A673 (cell line): ENCODE measurements at regions of chr12 and their contacts with region 1.

Region 1: DNA sequence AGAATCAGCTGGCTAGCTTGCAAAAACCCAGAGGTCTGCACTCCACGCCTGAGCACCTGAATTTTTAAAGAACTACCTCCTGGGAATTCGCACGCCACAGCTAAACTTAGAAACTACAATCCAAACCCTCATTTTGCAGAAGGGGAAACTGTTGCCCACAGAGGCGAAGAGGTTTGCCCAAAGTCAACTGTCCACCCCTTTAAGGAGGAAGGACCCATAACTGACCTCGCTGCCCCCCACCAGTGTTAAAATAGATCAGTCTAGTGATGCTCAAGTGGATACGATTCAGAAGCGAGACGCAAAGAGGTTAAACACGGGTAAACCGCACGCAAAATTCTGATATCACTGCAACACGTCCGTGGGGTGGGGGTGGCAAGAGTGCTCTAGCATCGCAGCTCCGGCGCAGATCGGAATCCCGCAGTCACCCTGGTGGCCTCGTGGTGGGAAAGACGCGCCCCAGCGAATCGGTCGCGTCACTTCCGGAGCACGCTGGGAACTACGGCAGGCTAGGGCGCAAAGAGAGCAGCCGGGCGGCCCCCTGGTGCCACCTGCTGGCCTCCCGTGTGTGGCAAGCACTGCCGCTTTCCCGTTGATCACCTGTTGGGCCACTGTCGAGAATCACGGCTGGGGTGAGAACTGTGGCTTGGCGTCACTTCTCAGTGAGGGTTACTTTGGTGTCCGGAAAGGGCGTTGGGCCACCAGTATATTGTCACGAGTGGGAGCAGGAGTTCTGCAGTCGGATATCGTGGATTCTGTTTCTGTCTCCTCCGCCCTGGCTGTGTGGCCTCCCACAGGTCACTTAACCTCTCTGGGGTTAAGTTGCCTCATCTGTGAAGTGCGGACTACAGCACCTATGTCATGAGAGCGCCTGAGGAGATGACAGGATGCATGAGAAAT is at the start of gene ALKBH2:
- DNase-seq: peak; percentile 96
- H3K4me3 ChIP-seq: peak within 1 kb of the TSS; percentile 48
- H3K27ac ChIP-seq: peak within 1 kb of the TSS; percentile 55
- H3K4me1 ChIP-seq: peaks cover 21% of the 10 kb centered on the region
- H3K27me3 ChIP-seq: no peaks in the 10 kb centered on the region
- CTCF ChIP-seq: peak; percentile 98
- total RNA-seq, gene ALKBH2: 40.6 and 44.5 TPM in 2 replicates

Region 2: GRCh38 chr12:108562348-108563135 is 530.7 kb before region 1 on chr12 and contains the start of gene ISCU:
- CTCF ChIA-PET with region 1: no interaction called
- POLR2A ChIA-PET with region 1: no interaction called
- intact Hi-C with region 1: loop called (anchors 2 kb)
- DNase-seq: peak; percentile 98
- H3K4me3 ChIP-seq: peak within 1 kb of the TSS; percentile 79
- H3K27ac ChIP-seq: peak within 1 kb of the TSS; percentile 97
- H3K4me1 ChIP-seq: peaks cover 35% of the 10 kb centered on the region
- H3K27me3 ChIP-seq: no peaks in the 10 kb centered on the region
- CTCF ChIP-seq: no peak
- total RNA-seq, gene ISCU: 73.4 and 79.3 TPM in 2 replicates

Region 3: GRCh38 chr12:108803428-108804105 is 289.7 kb before region 1 on chr12:
- CTCF ChIA-PET with region 1: no interaction called
- POLR2A ChIA-PET with region 1: no interaction called
- intact Hi-C with region 1: loop called (anchors 1 kb)
- DNase-seq: peak; percentile 88
- H3K4me3 ChIP-seq: no peak overlapping the region
- H3K27ac ChIP-seq: peak overlapping the region; percentile 37
- H3K4me1 ChIP-seq: peaks cover 25% of the 10 kb centered on the region
- H3K27me3 ChIP-seq: no peaks in the 10 kb centered on the region
- CTCF ChIP-seq: peak; percentile 96

Region 4: GRCh38 chr12:108884116-108885012 is 208.9 kb before region 1 on chr12:
- CTCF ChIA-PET with region 1: no interaction called
- POLR2A ChIA-PET with region 1: no interaction called
- intact Hi-C with region 1: loop called (anchors 1 kb)
- DNase-seq: peak; percentile 67
- H3K4me3 ChIP-seq: no peak overlapping the region
- H3K27ac ChIP-seq: no peak overlapping the region
- H3K4me1 ChIP-seq: no peaks in the 10 kb centered on the region
- H3K27me3 ChIP-seq: no peaks in the 10 kb centered on the region
- CTCF ChIP-seq: peak; percentile 77

Region 5: GRCh38 chr12:108980831-108981618 is 112.2 kb before region 1 on chr12:
- CTCF ChIA-PET with region 1: no interaction called
- POLR2A ChIA-PET with region 1: interaction called, 12 read pairs
- intact Hi-C with region 1: no loop called
- DNase-seq: no peak
- H3K4me3 ChIP-seq: no peak overlapping the region
- H3K27ac ChIP-seq: no peak overlapping the region
- H3K4me1 ChIP-seq: no peaks in the 10 kb centered on the region
- H3K27me3 ChIP-seq: peaks cover 13% of the 10 kb centered on the region
- CTCF ChIP-seq: no peak

Region 6: DNA sequence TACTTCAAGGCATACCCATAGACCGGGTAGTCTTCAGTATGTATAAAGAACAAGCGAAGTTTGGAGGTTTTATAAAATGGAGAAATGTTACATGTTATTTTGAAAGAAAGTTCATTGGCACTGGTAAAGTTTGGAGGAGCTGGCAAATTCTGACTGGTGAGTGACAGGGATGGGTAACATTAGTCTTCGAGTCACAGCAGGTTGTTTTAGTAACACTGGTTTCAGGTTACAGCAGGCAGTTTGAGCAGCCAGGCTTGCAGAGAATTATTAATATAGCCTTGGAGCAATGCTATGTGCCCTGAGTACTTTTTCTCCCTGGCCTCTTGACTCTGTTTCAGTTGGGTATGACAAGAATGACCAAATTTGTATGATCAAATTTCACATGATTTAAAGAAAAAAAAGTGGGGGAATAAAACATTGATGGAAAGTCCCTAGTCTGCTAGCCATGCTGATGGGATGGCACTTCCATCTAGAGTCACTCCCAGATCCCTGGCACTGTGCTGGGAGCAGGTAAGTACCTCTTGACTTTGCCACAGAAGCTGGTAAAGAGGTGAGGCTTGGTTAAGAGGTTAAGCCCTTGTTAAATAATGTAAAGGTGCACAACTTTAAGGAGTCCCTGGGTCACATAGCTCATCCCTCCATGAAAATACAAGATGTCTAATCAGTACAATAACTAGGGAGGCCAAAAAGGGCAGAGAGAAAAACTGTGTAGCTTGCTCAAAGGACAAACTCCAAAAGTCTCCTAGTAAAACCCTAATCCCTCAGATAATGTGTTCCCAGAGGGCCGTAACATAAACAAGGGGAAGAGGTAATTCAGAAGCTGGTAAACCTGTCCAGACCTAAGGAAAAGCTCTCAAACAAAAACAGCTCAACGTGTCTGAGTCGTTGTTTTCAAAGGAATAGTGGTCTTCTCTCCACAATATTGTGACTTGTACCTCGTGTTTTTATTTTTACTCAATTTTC is 59.8 kb before region 1 on chr12:
- CTCF ChIA-PET with region 1: no interaction called
- POLR2A ChIA-PET with region 1: no interaction called
- intact Hi-C with region 1: no loop called
- DNase-seq: no peak
- H3K4me3 ChIP-seq: no peak overlapping the region
- H3K27ac ChIP-seq: no peak overlapping the region
- H3K4me1 ChIP-seq: no peaks in the 10 kb centered on the region
- H3K27me3 ChIP-seq: peaks cover 16% of the 10 kb centered on the region
- CTCF ChIP-seq: no peak